Natural killer cell (primary cell): ENCODE measurements at regions of chr13 and their contacts with region 1.

Region 1: GRCh38 chr13:112434032-112434431 is 57.9 kb downstream of the SPACA7 start:
- DNase-seq: no peak
- ATAC-seq: no peak
- H3K4me3 ChIP-seq: no peak overlapping the region
- H3K4me3 Mint-ChIP-seq: no peak overlapping the region
- H3K27ac ChIP-seq: no peak overlapping the region
- H3K27ac Mint-ChIP-seq: no peak overlapping the region
- H3K4me1 ChIP-seq: no peaks in the 10 kb centered on the region
- H3K4me1 Mint-ChIP-seq: no peaks in the 10 kb centered on the region
- H3K27me3 ChIP-seq: no peaks in the 10 kb centered on the region
- H3K27me3 Mint-ChIP-seq: peaks cover 0 to 5% of the 10 kb centered on the region in 2 donors
- CTCF ChIP-seq: no peak

Region 2: DNA sequence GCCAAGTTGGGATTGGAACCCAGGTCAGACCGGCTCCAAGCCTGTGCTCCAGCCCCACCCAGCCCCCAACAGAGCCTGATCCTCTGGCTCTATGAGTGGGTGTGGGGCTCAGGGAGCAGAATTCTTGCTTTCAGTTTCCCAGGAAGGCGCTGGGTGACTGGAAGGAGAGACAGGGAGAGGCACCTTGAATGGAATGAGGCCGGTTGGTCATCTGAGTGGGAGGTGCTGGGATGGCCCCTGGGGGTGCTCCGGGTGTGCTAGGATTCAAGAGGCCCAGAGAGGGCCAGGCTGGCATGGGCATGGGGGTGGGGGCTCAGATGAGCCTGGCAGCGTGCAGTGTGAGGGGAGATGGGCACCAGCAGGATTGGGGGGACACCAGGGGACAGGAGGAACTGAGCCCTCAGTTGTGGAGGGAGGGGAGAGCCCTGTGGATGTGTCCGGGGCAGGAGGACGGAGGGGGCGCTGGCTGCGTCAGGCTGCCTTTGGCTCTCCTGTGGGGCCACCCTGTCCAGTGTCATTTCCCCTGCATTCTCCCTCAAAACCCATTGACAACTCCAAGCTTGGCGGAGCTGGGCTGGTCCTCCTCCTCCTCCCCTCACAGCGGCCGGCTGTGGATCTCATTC is 1488.0 kb before region 1 on chr13:
- intact Hi-C with region 1: loop called (anchors 5 kb)
- DNase-seq: no peak
- ATAC-seq: no peak
- H3K4me3 ChIP-seq: no peak overlapping the region
- H3K4me3 Mint-ChIP-seq: no peak overlapping the region
- H3K27ac ChIP-seq: no peak overlapping the region
- H3K27ac Mint-ChIP-seq: no peak overlapping the region
- H3K4me1 ChIP-seq: no peaks in the 10 kb centered on the region
- H3K4me1 Mint-ChIP-seq: no peaks in the 10 kb centered on the region
- H3K27me3 ChIP-seq: no peaks in the 10 kb centered on the region
- H3K27me3 Mint-ChIP-seq: peaks cover 2 to 8% of the 10 kb centered on the region in 2 donors
- CTCF ChIP-seq: no peak

Region 3: DNA sequence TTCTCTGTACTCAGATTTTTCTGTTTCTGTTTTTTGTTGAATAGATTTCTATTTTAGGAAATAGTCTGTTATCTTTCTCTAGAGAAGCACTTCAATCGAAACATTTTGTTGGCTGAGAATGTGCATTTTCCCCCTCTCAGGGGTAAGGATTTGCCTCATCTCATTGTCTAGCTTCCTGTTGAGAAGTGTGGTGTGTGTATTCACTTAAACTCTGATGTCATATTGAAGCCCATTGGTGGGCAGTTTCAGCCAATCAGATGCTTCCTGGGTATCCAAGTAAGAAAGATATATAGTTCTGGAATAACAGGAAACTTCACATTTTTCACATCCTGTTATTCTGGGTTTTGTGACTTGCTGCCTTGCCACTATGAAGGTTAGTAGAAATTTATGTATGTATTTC is 1231.3 kb before region 1 on chr13:
- intact Hi-C with region 1: no loop called
- DNase-seq: peak in 1 of 2 donors; percentile 63
- ATAC-seq: peak; percentile 57 to 64 (median 58)
- H3K4me3 ChIP-seq: no peak overlapping the region
- H3K4me3 Mint-ChIP-seq: no peak overlapping the region
- H3K27ac ChIP-seq: no peak overlapping the region
- H3K27ac Mint-ChIP-seq: peak overlapping the region; percentile 68 to 77
- H3K4me1 ChIP-seq: peaks cover 23% of the 10 kb centered on the region
- H3K4me1 Mint-ChIP-seq: peaks cover 70 to 80% of the 10 kb centered on the region in 2 donors
- H3K27me3 ChIP-seq: no peaks in the 10 kb centered on the region
- H3K27me3 Mint-ChIP-seq: no peaks in the 10 kb centered on the region
- CTCF ChIP-seq: no peak